ENCODE measurements at regions of chr5 and their contacts with region 1.

Region 1: GRCh38 chr5:177006265-177006972 is at the start of gene UIMC1:
- DNase-seq: peak; percentile 58
- H3K4me3 ChIP-seq: peak within 1 kb of the TSS; percentile 90
- CTCF ChIP-seq: no peak

Region 2: DNA sequence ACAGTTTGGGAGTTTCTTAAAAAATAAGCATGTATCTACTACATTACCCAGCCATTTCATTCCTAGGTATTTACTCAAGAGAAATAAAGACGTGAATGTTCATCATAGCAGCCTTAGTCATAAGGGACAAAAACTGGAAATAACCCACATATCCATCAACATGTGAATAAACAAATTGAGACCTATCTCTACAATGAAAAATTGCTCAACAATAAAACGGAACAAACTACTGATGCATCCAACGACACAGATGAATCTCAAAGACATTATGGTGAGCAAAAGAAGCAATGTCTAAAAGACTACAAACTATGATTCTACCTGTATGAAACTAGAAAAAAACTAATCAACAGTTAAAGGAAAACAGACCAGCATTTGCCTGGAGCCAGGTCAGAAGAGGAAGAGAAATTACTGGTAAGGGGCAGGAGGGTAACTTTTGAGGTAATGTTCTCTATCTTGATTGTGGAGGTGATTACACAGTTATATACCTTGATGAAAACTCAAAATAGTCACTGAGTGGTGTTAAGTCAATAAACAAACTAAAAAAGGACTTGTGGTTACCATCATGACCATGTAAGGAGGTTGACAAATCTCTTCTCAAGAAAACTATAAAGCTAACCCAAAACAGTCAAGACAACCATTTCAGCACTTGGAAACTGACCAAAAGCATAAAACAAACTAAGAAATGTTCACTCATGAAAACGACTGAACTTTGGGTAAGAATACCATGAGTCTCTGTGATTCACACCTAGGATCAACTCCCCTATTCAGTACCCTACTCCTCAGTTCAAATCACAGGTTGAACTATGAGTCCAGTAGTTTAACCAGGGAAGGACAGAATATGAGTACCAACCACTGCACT is 10.3 kb before region 1 on chr5:
- CTCF ChIA-PET with region 1: interaction called, 13 read pairs
- POLR2A ChIA-PET with region 1: interaction called, 3 read pairs
- DNase-seq: peak; percentile 51
- H3K4me3 ChIP-seq: no peak overlapping the region
- CTCF ChIP-seq: no peak

Region 3: DNA sequence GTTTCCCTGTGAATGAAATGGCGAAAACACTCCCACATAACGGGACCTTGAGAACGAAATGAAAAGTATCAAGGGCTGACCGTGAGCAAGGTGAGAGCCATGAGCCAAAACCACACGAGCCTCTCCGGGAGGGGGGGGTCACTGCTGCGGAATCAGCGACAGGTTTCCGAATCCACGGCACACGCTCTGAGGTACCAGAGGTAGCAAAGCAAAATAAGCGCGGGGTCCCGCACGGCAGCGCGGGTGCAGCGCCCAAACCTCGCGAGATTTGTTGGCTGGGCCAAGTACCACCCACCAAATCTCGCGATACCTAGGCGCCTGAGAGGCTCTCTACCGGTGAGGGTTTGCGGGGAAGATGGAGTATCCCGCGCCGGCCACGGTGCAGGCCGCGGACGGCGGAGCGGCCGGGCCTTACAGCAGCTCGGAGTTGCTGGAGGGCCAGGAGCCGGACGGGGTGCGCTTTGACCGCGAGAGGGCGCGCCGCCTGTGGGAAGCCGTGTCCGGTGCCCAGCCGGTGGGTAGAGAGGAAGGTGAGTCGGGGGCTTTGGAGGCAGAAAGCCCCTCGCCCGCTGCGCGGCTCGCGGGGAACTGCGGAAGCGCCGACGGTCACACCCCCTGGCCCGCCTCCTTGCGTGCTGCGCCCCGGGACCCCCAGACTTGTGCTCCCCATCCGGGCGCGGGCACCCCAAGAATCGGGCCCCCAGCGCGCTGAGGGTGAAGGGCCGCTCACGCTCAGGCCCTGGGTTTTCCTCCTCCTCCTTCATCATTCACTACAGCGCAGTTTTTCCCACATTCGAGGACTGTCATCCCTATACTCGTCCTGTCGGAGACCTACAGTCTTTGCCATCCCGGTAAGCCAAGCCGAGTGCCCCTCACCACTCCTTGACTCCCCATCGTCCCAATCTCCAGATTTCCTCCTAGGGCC is 16.2 kb after region 1 on chr5 and contains the start of gene ZNF346:
- CTCF ChIA-PET with region 1: interaction called, 19 read pairs
- POLR2A ChIA-PET with region 1: interaction called, 3 read pairs
- DNase-seq: no peak
- H3K4me3 ChIP-seq: peak within 1 kb of the TSS; percentile 93
- CTCF ChIP-seq: peak; percentile 38

Measured in AG04449 (cell line).